Astrocyte of the cerebellum (primary cell): ENCODE measurements at regions of chr2 and their contacts with region 1.

Region 1: DNA sequence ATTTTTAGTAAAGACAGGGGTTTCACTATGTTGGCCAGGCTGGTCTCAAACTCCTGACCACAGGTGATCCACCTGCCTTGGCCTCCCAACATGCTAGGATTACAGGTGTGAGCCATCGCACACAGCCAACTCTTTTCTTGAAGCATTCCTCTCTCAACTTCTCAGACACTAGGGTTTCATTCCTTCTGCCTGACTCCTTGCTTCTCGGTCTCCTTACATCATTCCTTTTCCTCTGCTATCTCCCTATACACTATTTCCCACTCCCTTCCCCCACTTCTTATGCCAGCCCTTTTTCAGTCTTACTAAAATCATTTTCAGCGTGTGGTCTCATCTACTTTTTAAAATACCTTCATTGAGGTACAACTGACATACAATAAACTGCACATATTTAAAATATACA is 6.1 kb downstream of the SOS1 start:
- DNase-seq: no peak
- H3K4me3 ChIP-seq: no peak overlapping the region
- CTCF ChIP-seq: no peak

Region 2: DNA sequence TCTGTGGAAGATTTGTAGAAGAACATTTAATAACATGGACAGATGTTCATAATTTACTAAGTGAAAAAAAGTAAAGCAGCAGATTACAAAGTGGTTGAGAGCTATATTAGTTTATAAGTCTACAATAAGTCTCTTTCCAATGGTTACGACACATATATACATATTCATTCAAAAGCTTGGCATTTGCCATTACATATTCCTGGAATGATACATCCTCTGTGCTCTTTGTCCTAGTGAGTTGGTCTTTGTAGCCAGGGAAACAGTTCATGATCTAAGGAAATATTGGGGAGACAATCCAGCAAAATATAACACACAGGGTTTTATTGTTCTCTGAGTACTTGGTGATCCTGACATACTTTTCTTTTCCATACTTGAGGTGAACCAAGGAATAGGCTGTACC is 38.5 kb after region 1 on chr2:
- in situ Hi-C with region 1: loop called (anchors 5 kb)
- DNase-seq: no peak
- H3K4me3 ChIP-seq: no peak overlapping the region
- CTCF ChIP-seq: no peak